ENCODE measurements at regions of chr12 and their contacts with region 1.

Region 1: GRCh38 chr12:92784795-92785562 is 82.2 kb downstream of the PLEKHG7 start:
- DNase-seq: peak; percentile 80
- H3K4me3 Mint-ChIP-seq: peak overlapping the region; percentile 37
- H3K27ac Mint-ChIP-seq: peak overlapping the region; percentile 98
- H3K4me1 Mint-ChIP-seq: peaks cover 30% of the 10 kb centered on the region
- H3K27me3 Mint-ChIP-seq: no peaks in the 10 kb centered on the region
- CTCF ChIP-seq: peak; percentile 49

Region 2: GRCh38 chr12:92745856-92746540 is 39.0 kb before region 1 on chr12:
- CTCF ChIA-PET with region 1: no interaction called
- POLR2A ChIA-PET with region 1: no interaction called
- intact Hi-C with region 1: no loop called
- DNase-seq: peak; percentile 96
- H3K4me3 Mint-ChIP-seq: no peak overlapping the region
- H3K27ac Mint-ChIP-seq: peak overlapping the region; percentile 77
- H3K4me1 Mint-ChIP-seq: peaks cover 18% of the 10 kb centered on the region
- H3K27me3 Mint-ChIP-seq: no peaks in the 10 kb centered on the region
- CTCF ChIP-seq: no peak

Region 3: DNA sequence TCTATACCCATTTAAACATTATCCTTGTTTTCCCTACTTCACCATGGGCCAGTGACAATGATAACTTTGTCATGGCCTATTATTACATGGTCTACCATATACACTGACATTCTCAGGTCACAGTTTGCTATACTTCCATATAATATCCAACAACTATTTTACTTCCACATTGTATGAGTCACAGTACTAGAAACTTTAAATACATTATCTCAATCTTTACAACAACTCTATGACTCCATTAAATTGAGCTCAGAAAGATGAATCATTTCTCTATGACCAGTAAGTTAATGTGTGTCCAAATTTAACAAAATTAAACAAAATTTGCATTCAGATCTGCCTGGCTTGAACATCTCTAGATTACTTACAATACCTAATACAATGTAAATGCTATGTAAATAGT is 11.7 kb after region 1 on chr12:
- CTCF ChIA-PET with region 1: interaction called, 13 read pairs
- POLR2A ChIA-PET with region 1: interaction called, 16 read pairs
- intact Hi-C with region 1: no loop called
- DNase-seq: no peak
- H3K4me3 Mint-ChIP-seq: no peak overlapping the region
- H3K27ac Mint-ChIP-seq: no peak overlapping the region
- H3K4me1 Mint-ChIP-seq: no peaks in the 10 kb centered on the region
- H3K27me3 Mint-ChIP-seq: no peaks in the 10 kb centered on the region
- CTCF ChIP-seq: no peak

Region 4: DNA sequence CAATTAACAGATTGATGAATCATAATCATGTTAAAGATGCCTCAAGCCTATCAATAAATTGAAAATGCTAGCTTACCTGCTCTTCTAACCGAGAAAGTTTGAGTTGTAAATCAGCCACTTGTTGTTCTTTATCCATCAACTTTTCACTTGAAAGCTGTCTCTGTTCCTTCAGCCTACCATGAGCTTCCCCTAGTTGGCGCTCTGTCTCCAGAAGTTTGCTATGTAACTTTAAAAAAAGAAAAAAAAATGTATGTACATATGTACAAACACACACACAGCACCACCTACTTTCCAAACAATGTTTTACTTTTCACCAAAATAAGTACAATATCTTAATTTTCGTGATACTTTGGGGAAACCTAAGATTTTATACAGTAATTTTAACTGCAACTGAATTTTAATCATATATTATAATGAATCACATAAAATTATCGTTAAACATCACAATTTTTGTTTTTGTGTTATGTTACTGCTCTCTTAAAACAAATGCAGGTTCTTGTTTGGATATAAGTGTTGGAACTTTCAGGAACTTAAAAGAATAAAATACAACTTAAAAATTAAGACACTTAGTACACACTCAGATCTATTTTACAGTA is 43.0 kb after region 1 on chr12:
- CTCF ChIA-PET with region 1: interaction called, 4 read pairs
- POLR2A ChIA-PET with region 1: interaction called, 3 read pairs
- intact Hi-C with region 1: loop called (anchors 2 kb)
- DNase-seq: peak; percentile 69
- H3K4me3 Mint-ChIP-seq: no peak overlapping the region
- H3K27ac Mint-ChIP-seq: no peak overlapping the region
- H3K4me1 Mint-ChIP-seq: no peaks in the 10 kb centered on the region
- H3K27me3 Mint-ChIP-seq: no peaks in the 10 kb centered on the region
- CTCF ChIP-seq: peak; percentile 78

Region 5: GRCh38 chr12:92952394-92952793 is 167.4 kb after region 1 on chr12:
- CTCF ChIA-PET with region 1: no interaction called
- POLR2A ChIA-PET with region 1: no interaction called
- intact Hi-C with region 1: no loop called
- DNase-seq: no peak
- H3K4me3 Mint-ChIP-seq: no peak overlapping the region
- H3K27ac Mint-ChIP-seq: no peak overlapping the region
- H3K4me1 Mint-ChIP-seq: peaks cover 6% of the 10 kb centered on the region
- H3K27me3 Mint-ChIP-seq: no peaks in the 10 kb centered on the region
- CTCF ChIP-seq: no peak

Region 6: DNA sequence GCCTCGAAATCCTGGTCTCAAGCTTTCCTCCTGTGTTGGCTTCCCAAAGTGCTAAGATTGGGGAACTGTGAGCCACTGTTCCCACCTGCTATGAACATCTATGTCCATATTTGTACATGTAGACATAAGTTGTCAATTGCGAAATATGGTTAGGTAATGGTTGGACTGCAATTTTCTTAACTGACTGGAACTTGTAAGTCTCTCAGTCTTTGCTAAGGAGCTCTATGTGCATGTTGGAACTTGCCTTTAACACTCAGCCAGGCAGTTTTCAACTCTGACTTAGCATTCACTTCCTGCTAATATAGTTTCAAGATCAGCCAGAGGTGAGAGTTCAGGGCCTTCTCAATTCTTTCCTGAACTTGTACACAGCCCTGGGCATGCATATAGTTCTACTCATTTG is 188.6 kb after region 1 on chr12:
- CTCF ChIA-PET with region 1: no interaction called
- POLR2A ChIA-PET with region 1: interaction called, 3 read pairs
- intact Hi-C with region 1: loop called (anchors 5 kb)
- DNase-seq: peak; percentile 97
- H3K4me3 Mint-ChIP-seq: peak overlapping the region; percentile 51
- H3K27ac Mint-ChIP-seq: peak overlapping the region; percentile 94
- H3K4me1 Mint-ChIP-seq: peaks cover 25% of the 10 kb centered on the region
- H3K27me3 Mint-ChIP-seq: no peaks in the 10 kb centered on the region
- CTCF ChIP-seq: no peak

Region 7: GRCh38 chr12:93397412-93397811 is 612.4 kb after region 1 on chr12:
- CTCF ChIA-PET with region 1: no interaction called
- POLR2A ChIA-PET with region 1: interaction called, 3 read pairs
- intact Hi-C with region 1: loop called (anchors 5 kb)
- DNase-seq: no peak
- H3K4me3 Mint-ChIP-seq: no peak overlapping the region
- H3K27ac Mint-ChIP-seq: no peak overlapping the region
- H3K4me1 Mint-ChIP-seq: no peaks in the 10 kb centered on the region
- H3K27me3 Mint-ChIP-seq: no peaks in the 10 kb centered on the region
- CTCF ChIP-seq: no peak

Measured in MCF 10A (cell line).